Activated CD4-positive, alpha-beta memory T cell treated with anti-CD3 and anti-CD28 coated beads for 36 hours (primary cell): ENCODE measurements at regions of chr19 and their contacts with region 1.

Region 1: DNA sequence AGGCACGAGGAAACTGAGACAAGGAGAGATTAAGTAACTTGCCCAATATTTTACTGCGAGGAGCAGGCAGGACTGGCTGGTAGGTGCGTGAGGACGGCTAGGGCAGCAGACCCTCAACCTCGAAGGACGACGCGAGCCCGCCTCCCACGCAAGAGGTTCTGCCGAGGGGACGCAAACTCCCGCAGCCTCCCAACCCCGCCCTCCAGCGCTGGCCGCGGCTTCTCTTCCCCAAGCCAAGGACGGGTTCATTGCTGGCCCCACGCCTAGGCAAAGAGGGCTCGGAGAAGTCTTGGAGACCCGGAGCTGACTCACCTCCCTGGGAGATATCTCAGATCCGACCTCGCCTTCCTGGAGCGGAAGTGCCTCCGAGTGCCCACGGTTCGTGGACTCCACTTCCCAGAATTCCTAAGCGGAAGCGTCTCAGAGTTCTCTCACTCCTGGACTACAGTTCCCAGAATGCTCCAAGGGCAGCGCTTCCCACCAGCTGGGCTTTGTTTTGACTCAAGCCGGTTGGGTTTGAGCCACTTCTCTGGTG is at the start of gene ZNF235:
- DNase-seq: peak; percentile 87
- H3K4me3 Mint-ChIP-seq: peak within 1 kb of the TSS; percentile 83
- H3K27ac Mint-ChIP-seq: peak within 1 kb of the TSS; percentile 18
- H3K4me1 Mint-ChIP-seq: peaks cover 15% of the 10 kb centered on the region
- H3K27me3 Mint-ChIP-seq: no peaks in the 10 kb centered on the region
- total RNA-seq, gene ZNF235: 1.2 to 1.3 TPM

Region 2: GRCh38 chr19:44228318-44228717 is 76.4 kb before region 1 on chr19:
- CTCF ChIA-PET with region 1: no interaction called
- POLR2A ChIA-PET with region 1: no interaction called
- intact Hi-C with region 1: no loop called
- DNase-seq: no peak
- H3K4me3 Mint-ChIP-seq: no peak overlapping the region
- H3K27ac Mint-ChIP-seq: no peak overlapping the region
- H3K4me1 Mint-ChIP-seq: peaks cover 2% of the 10 kb centered on the region
- H3K27me3 Mint-ChIP-seq: no peaks in the 10 kb centered on the region

Region 3: GRCh38 chr19:44447916-44448674 is 143.4 kb after region 1 on chr19 and contains the start of gene ZNF229:
- CTCF ChIA-PET with region 1: no interaction called
- POLR2A ChIA-PET with region 1: no interaction called
- intact Hi-C with region 1: no loop called
- DNase-seq: peak; percentile 68
- H3K4me3 Mint-ChIP-seq: peak within 1 kb of the TSS; percentile 69
- H3K27ac Mint-ChIP-seq: no peak within 1 kb of the TSS
- H3K4me1 Mint-ChIP-seq: peaks cover 6% of the 10 kb centered on the region
- H3K27me3 Mint-ChIP-seq: peaks cover 2% of the 10 kb centered on the region
- total RNA-seq, gene ZNF229: 0.05 TPM

Region 4: GRCh38 chr19:44476559-44477408 is 172.1 kb after region 1 on chr19:
- CTCF ChIA-PET with region 1: no interaction called
- POLR2A ChIA-PET with region 1: no interaction called
- intact Hi-C with region 1: no loop called
- DNase-seq: no peak
- H3K4me3 Mint-ChIP-seq: no peak overlapping the region
- H3K27ac Mint-ChIP-seq: peak overlapping the region; percentile 33
- H3K4me1 Mint-ChIP-seq: no peaks in the 10 kb centered on the region
- H3K27me3 Mint-ChIP-seq: no peaks in the 10 kb centered on the region

Region 5: DNA sequence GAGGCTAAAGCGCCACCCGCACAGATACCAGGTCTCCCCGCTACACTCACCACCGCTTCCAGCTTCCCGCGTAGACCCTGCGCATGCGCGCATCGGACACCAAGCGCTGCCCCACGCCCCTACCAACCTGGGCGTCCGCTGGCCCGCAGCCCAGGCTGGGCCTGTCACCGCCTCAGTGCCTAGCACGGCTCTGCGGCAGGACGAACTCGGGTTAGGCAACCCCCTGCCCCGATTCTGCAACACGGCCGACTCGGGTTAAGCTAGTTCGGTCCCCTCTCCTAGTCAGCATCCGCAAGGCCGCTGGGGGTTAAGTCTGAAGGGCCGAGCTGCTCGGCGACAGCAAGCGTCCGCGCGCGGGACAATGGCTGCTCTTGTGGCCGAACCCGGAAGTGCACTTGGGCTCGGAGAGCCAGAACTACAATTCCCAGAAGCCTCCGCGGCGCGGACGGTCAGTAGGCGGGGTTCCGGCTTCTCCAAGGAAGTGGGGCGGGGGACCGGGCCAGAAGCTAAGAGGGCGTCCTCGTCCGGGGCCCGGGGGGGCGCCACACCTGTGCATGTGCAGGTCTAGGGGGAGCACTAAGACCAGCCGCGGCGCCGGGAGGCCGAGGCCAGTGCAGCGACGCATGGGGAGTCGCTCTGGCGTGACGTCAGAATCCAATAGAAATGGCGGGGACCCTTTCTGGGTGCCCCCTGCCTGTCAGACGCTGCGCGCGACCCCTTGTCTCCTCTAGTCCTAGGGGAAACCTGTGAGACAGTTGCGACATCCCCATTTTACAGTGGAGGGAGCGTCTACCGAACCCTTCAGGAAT is 195.6 kb after region 1 on chr19 and contains the start of gene ZNF180:
- CTCF ChIA-PET with region 1: no interaction called
- POLR2A ChIA-PET with region 1: no interaction called
- intact Hi-C with region 1: loop called (anchors 10 kb)
- DNase-seq: peak; percentile 96
- H3K4me3 Mint-ChIP-seq: peak within 1 kb of the TSS; percentile 87
- H3K27ac Mint-ChIP-seq: peak within 1 kb of the TSS; percentile 90
- H3K4me1 Mint-ChIP-seq: peaks cover 23% of the 10 kb centered on the region
- H3K27me3 Mint-ChIP-seq: peaks cover 6% of the 10 kb centered on the region
- total RNA-seq, gene ZNF180: 4.3 to 5.4 TPM